ENCODE measurements at regions of chr15 and their contacts with region 1.

Region 1: DNA sequence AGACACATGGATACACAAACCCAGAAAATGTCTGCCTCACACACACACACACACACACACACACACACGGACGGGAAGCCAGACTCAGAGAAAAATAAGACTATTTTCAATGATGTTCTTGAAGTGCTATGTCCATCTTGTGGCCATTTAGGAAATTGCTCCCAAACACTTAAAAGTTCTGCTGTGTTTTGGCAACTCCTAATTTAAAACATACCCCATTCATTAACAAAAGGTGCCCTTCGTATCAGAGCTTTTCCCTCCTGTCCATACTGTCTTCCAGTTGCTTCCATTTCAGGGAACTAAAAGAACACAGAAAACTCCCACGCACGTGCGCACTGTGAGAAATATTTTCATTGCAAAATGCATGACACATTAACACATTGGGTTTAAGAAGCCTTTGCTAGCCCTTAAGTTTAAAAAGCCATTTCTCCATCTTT is 44.6 kb downstream of the SLC12A1 start:
- DNase-seq: peak; percentile 25
- H3K4me3 Mint-ChIP-seq: no peak overlapping the region
- H3K27ac Mint-ChIP-seq: no peak overlapping the region
- H3K4me1 Mint-ChIP-seq: no peaks in the 10 kb centered on the region
- H3K27me3 Mint-ChIP-seq: peaks cover 16% of the 10 kb centered on the region

Region 2: DNA sequence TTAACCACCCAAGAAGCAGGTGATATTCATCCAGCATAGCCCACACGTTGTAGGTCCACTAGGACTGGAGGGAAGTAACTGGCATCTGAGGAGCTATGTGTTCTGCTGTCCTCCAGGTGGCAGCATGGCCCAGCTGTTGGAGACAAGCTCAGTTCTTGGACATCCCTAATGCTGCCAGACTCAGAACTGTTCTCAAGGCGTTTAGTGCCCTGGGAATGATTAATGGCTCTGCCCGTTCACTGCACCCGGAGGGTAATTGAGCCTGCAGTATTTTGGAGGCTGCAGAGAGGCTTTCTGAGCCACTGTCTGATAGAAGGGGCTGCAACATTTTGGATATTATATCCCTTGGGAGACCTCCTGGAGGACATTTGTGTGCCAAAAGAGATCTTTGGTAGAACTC is 1054.6 kb before region 1 on chr15:
- CTCF ChIA-PET with region 1: no interaction called
- intact Hi-C with region 1: loop called (anchors 2 kb)
- DNase-seq: peak; percentile 67
- H3K4me3 Mint-ChIP-seq: no peak overlapping the region
- H3K27ac Mint-ChIP-seq: no peak overlapping the region
- H3K4me1 Mint-ChIP-seq: no peaks in the 10 kb centered on the region
- H3K27me3 Mint-ChIP-seq: peaks cover 18% of the 10 kb centered on the region

Region 3: DNA sequence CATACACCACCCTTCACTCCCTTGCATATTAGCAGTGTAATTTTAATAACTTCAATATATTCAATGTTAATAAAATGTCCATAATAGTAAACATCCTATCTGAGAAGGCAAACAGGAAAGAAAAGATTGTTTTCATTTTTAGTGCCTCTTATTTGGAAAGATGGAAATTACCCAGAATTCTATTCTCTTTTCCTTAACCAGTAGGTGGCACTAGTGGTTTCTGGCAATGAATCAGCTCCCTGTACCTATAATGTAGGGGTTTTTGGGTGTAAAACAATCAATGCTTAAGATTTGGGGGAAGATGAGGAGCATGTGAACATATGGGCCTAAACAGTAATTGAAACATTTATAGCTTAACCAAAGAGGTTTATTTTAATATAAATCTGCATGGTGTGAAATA is 539.0 kb before region 1 on chr15:
- CTCF ChIA-PET with region 1: interaction called, 3 read pairs
- intact Hi-C with region 1: loop called (anchors 2 kb)
- DNase-seq: no peak
- H3K4me3 Mint-ChIP-seq: no peak overlapping the region
- H3K27ac Mint-ChIP-seq: no peak overlapping the region
- H3K4me1 Mint-ChIP-seq: no peaks in the 10 kb centered on the region
- H3K27me3 Mint-ChIP-seq: peaks cover 27% of the 10 kb centered on the region

Region 4: GRCh38 chr15:48559285-48559684 is 308.6 kb after region 1 on chr15:
- CTCF ChIA-PET with region 1: no interaction called
- intact Hi-C with region 1: no loop called
- DNase-seq: no peak
- H3K4me3 Mint-ChIP-seq: no peak overlapping the region
- H3K27ac Mint-ChIP-seq: no peak overlapping the region
- H3K4me1 Mint-ChIP-seq: no peaks in the 10 kb centered on the region
- H3K27me3 Mint-ChIP-seq: no peaks in the 10 kb centered on the region

Measured in activated naive CD4-positive, alpha-beta T cell treated with anti-CD3 and anti-CD28 coated beads for 36 hours (primary cell).